ENCODE measurements at regions of chr7 and their contacts with region 1.

Region 1: DNA sequence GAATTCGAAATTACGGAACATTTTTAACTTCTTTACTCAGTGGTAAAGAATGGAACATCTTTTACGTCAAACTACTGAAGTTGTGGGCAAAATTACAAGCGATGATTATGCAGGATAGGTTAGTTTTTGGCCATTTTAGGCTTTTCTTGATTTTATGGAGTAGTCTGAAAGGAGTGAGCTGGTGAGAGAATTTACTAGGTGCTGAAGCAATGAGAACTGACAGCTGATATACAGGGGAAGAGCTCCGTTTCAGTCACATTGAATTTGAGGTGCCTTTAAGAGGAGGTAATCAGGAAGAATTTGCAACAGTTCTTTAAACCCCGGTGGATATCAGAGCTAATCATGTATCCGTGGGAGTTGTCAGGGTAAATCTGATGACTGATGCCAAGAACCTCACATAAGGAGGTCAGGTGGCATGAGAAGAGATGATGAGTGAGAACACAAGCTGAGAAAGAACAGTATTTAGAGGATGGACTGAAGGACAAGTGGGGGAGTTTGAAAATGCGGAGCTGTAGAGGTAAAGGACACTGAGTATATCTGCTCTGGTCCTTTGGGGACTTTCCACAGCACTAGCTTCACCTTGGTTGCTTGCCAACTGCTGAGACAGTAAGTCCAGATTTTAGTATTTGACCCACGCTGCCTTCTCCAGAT is 104.3 kb downstream of the AHR start:
- DNase-seq: peak; percentile 49
- H3K4me3 Mint-ChIP-seq: peak overlapping the region; percentile 53
- H3K27ac Mint-ChIP-seq: peak overlapping the region; percentile 92
- H3K4me1 Mint-ChIP-seq: peaks cover 44% of the 10 kb centered on the region
- H3K27me3 Mint-ChIP-seq: peaks cover 8% of the 10 kb centered on the region

Region 2: DNA sequence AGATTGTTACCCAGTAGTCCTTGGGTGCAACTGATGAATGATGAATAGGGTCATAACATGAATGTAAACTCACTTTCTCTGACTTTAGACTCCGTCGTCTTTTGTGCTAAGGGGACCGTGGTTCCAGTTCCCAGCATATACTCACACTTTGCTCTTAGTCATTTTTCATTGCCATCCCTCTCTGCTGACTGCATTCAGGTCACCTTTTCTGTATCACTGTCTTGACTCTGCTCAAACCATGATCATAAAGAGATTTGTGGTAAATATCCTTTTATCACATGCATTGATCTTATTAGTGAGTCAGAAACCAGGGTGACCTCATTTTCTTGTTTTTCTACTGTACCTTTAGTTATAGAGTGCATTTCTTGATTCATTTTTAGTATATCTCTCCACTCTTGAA is 379.8 kb before region 1 on chr7:
- CTCF ChIA-PET with region 1: no interaction called
- POLR2A ChIA-PET with region 1: no interaction called
- intact Hi-C with region 1: loop called (anchors 1 kb)
- DNase-seq: peak; percentile 60
- H3K4me3 Mint-ChIP-seq: no peak overlapping the region
- H3K27ac Mint-ChIP-seq: peak overlapping the region; percentile 7
- H3K4me1 Mint-ChIP-seq: peaks cover 17% of the 10 kb centered on the region
- H3K27me3 Mint-ChIP-seq: peaks cover 1% of the 10 kb centered on the region

Region 3: GRCh38 chr7:17234398-17235031 is 168.2 kb before region 1 on chr7:
- CTCF ChIA-PET with region 1: no interaction called
- POLR2A ChIA-PET with region 1: no interaction called
- intact Hi-C with region 1: loop called (anchors 1 kb)
- DNase-seq: peak; percentile 83
- H3K4me3 Mint-ChIP-seq: peak overlapping the region; percentile 71
- H3K27ac Mint-ChIP-seq: peak overlapping the region; percentile 89
- H3K4me1 Mint-ChIP-seq: peaks cover 48% of the 10 kb centered on the region
- H3K27me3 Mint-ChIP-seq: no peaks in the 10 kb centered on the region

Region 4: GRCh38 chr7:17292843-17293242 is 109.9 kb before region 1 on chr7:
- CTCF ChIA-PET with region 1: no interaction called
- POLR2A ChIA-PET with region 1: no interaction called
- intact Hi-C with region 1: no loop called
- DNase-seq: no peak
- H3K4me3 Mint-ChIP-seq: no peak overlapping the region
- H3K27ac Mint-ChIP-seq: no peak overlapping the region
- H3K4me1 Mint-ChIP-seq: peaks cover 14% of the 10 kb centered on the region
- H3K27me3 Mint-ChIP-seq: no peaks in the 10 kb centered on the region

Region 5: DNA sequence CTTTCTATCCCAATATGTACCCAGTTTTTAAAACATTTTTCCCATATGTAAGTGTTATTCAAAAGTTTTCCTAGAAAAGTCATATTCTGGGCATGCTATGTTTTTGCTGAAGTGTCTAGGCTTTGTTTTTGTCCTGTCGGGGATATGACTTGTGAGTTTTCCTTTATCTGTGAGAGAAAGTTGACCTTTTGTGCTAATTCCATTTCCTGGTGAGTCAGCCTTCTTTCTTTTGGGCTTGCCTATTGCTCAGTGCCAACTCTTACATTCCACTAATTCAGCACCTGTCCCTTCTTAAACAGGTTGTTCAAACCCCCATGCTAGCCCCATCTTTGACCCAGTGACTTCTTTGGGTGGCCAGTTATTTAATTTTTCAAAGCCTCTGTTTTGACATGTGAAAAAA is 41.9 kb after region 1 on chr7:
- CTCF ChIA-PET with region 1: no interaction called
- POLR2A ChIA-PET with region 1: no interaction called
- intact Hi-C with region 1: loop called (anchors 1 kb)
- DNase-seq: no peak
- H3K4me3 Mint-ChIP-seq: no peak overlapping the region
- H3K27ac Mint-ChIP-seq: no peak overlapping the region
- H3K4me1 Mint-ChIP-seq: peaks cover 6% of the 10 kb centered on the region
- H3K27me3 Mint-ChIP-seq: peaks cover 18% of the 10 kb centered on the region

Region 6: DNA sequence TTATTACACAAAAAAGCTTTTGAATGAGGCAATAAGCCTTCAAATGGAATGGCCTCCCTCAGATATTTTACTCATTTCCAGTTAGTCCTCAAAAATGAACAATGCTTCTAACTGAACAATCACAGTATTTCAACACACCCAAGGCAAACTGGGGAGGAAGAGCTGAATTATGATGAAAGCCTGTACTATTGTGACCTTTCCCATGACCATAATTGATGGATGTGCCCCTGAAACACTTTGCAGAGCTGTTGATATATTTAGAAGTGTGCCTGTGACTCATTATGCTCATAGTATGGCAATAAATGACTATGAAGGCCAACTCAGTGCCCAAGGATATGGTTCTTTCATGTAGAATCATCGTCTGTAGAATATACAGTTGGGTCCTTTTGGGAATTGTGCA is 143.8 kb after region 1 on chr7:
- CTCF ChIA-PET with region 1: no interaction called
- POLR2A ChIA-PET with region 1: no interaction called
- intact Hi-C with region 1: loop called (anchors 5 kb)
- DNase-seq: no peak
- H3K4me3 Mint-ChIP-seq: no peak overlapping the region
- H3K27ac Mint-ChIP-seq: no peak overlapping the region
- H3K4me1 Mint-ChIP-seq: no peaks in the 10 kb centered on the region
- H3K27me3 Mint-ChIP-seq: no peaks in the 10 kb centered on the region